Activated T-helper 1 cell treated with anti-CD3 and anti-CD28 coated beads, Interleukin-12 subunit alpha, Interleukin-12 subunit beta, Interleukin-2, Interleukin-4 antibody, amounts not matched to agents 30 ng/mL and 10 ng/mL and 1 ng/mL, durations not matched to agents 14 hours and 24 hours and 36 hours (primary cell): ENCODE measurements at regions of chr6 and their contacts with region 1.

Region 1: DNA sequence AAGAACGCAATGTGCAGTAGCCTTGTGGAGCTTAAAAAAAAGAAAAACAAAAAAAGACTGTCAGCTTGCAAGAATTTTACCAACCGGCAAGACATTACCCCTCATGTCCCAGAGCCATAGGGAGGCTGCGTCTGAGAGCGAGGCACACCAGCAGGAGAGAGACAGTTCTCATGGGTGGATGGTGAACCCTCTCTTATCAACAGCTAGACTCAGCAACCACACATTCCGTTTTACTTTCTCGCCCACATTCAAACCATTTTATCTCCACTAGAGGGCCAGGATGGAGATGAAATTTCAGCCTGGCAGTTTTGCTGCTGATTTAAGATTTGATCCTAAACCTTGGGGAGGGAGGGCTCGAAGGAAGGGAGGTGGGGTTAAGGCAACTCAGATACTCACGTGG is 247.0 kb downstream of the ATXN1 start:
- DNase-seq: peak; percentile 28
- H3K4me3 Mint-ChIP-seq: peak overlapping the region; percentile 45
- H3K27ac Mint-ChIP-seq: peak overlapping the region; percentile 60
- H3K4me1 Mint-ChIP-seq: peaks cover 78% of the 10 kb centered on the region
- H3K27me3 Mint-ChIP-seq: no peaks in the 10 kb centered on the region

Region 2: GRCh38 chr6:16438718-16439591 is 75.3 kb before region 1 on chr6:
- intact Hi-C with region 1: loop called (anchors 5 kb)
- DNase-seq: no peak
- H3K4me3 Mint-ChIP-seq: peak overlapping the region; percentile 51
- H3K27ac Mint-ChIP-seq: peak overlapping the region; percentile 79
- H3K4me1 Mint-ChIP-seq: peaks cover 81% of the 10 kb centered on the region
- H3K27me3 Mint-ChIP-seq: no peaks in the 10 kb centered on the region

Region 3: DNA sequence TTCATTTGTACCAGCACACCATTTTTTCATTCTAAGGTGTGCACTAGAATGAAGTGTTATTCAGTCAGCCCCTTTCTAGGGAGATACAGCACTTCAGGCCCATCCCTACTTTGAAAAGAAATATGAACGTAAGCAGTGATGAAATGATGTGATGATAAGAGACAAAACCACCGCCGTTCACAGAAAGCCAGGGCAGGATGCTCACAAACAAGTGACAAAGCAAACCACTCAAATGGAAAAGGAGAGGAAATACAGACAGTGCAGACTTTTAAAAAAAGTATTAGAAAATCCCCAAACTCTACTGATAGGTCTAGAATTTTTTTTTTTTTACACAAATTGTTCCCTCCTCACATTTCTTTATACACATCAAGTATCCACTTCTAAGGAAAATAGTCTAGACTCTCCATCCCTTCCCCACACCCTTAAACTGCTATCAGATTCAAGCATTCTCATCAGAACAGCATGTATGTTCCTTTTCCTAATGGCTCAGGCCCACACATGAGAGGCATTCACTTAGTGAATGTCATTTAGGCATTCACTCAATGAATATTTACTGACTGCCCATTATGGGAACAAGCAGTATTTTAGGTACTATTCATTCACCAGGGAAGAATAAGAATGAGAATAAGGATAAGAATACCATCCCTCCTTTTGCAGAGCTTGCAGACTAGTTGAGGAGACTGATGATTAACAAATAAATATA is 32.4 kb before region 1 on chr6:
- intact Hi-C with region 1: loop called (anchors 1 kb)
- DNase-seq: peak; percentile 74
- H3K4me3 Mint-ChIP-seq: peak overlapping the region; percentile 56
- H3K27ac Mint-ChIP-seq: peak overlapping the region; percentile 97
- H3K4me1 Mint-ChIP-seq: peaks cover 89% of the 10 kb centered on the region
- H3K27me3 Mint-ChIP-seq: no peaks in the 10 kb centered on the region

Region 4: DNA sequence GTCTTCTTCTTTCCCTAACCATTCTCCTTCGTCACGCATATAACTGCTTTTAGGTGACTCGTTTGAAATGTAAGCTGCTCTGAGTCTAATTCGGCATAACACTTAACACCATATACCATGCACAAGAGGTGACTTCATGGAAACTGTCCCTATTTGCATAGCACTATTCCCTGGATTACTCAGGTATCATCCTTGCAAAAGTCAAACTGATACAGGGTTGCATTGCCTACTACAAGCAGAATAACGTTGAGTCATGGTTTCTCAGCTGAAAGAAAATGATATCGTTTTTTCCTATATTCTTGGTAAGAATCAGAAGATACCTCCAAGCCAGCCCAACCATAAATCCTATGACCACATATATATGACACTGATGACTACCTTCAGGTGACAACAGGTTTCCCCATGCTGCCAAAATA is 19.5 kb after region 1 on chr6:
- intact Hi-C with region 1: loop called (anchors 2 kb)
- DNase-seq: no peak
- H3K4me3 Mint-ChIP-seq: no peak overlapping the region
- H3K27ac Mint-ChIP-seq: peak overlapping the region; percentile 83
- H3K4me1 Mint-ChIP-seq: peaks cover 45% of the 10 kb centered on the region
- H3K27me3 Mint-ChIP-seq: no peaks in the 10 kb centered on the region

Region 5: GRCh38 chr6:16684896-16685554 is 170.8 kb after region 1 on chr6:
- intact Hi-C with region 1: loop called (anchors 5 kb)
- DNase-seq: peak; percentile 71
- H3K4me3 Mint-ChIP-seq: peak overlapping the region; percentile 43
- H3K27ac Mint-ChIP-seq: peak overlapping the region; percentile 88
- H3K4me1 Mint-ChIP-seq: peaks cover 97% of the 10 kb centered on the region
- H3K27me3 Mint-ChIP-seq: no peaks in the 10 kb centered on the region

Region 6: DNA sequence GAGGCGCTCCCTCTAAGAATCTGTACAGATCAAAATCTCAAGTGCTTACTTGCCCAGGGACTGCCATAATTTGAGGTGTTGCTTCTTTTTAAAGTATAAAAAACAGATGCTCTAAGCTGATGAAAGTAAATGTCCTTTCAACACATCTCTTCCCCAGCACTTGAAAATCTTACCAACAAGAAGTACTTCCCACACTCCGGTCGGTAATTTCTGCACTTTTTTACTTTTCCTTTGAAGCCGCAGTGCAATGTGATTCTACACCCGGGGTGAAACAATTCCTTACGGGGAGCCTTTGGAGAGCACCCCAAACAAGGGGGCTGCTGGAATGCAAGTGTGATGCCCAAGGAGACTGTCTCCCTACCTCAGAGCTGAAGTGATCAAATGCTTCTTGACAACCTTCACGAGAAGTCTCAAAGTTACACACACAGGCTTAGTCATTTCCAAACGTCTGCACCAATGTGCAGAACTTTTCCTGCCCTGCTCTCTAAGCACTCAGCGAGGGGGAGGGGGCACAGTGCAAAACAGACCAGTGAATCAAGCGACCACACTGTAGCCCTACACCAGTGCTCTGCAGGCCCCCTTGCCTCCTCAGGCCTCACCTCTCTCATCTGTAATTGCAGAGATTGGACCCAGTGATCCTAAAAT is 190.3 kb after region 1 on chr6:
- intact Hi-C with region 1: no loop called
- DNase-seq: peak; percentile 48
- H3K4me3 Mint-ChIP-seq: peak overlapping the region; percentile 83
- H3K27ac Mint-ChIP-seq: peak overlapping the region; percentile 89
- H3K4me1 Mint-ChIP-seq: peaks cover 63% of the 10 kb centered on the region
- H3K27me3 Mint-ChIP-seq: no peaks in the 10 kb centered on the region

Region 7: GRCh38 chr6:16770701-16771569 is 256.7 kb after region 1 on chr6:
- intact Hi-C with region 1: loop called (anchors 1 kb)
- DNase-seq: peak; percentile 68
- H3K4me3 Mint-ChIP-seq: peak overlapping the region; percentile 12
- H3K27ac Mint-ChIP-seq: no peak overlapping the region
- H3K4me1 Mint-ChIP-seq: peaks cover 47% of the 10 kb centered on the region
- H3K27me3 Mint-ChIP-seq: no peaks in the 10 kb centered on the region